Thyroid gland (tissue), 4 donors: ENCODE measurements at regions of chr4 and their contacts with region 1.

Region 1: GRCh38 chr4:154618708-154619315 is 6.4 kb upstream of the FGG start:
- DNase-seq: peak; percentile 72 to 73
- H3K4me3 ChIP-seq: no peak overlapping the region
- H3K27ac ChIP-seq: no peak overlapping the region
- H3K4me1 ChIP-seq: no peaks in the 10 kb centered on the region
- H3K27me3 ChIP-seq: no peaks in the 10 kb centered on the region
- CTCF ChIP-seq: peak; percentile 27 to 74 (median 60)
- POLR2A ChIP-seq: no peak

Region 2: GRCh38 chr4:154329268-154329868 is 289.4 kb before region 1 on chr4:
- intact Hi-C with region 1: loop called (anchors 10 kb)
- DNase-seq: peak in 1 of 2 donors; percentile 12
- H3K4me3 ChIP-seq: no peak overlapping the region
- H3K27ac ChIP-seq: no peak overlapping the region
- H3K4me1 ChIP-seq: peaks cover 0 to 6% of the 10 kb centered on the region in 2 donors
- H3K27me3 ChIP-seq: no peaks in the 10 kb centered on the region
- CTCF ChIP-seq: peak in 3 of 6 experiments; percentile 45 to 55 (median 47)
- POLR2A ChIP-seq: no peak

Region 3: GRCh38 chr4:154559494-154560418 is 59.1 kb before region 1 on chr4:
- intact Hi-C with region 1: loop called (anchors 5 kb)
- DNase-seq: no peak
- H3K4me3 ChIP-seq: no peak overlapping the region
- H3K27ac ChIP-seq: no peak overlapping the region
- H3K4me1 ChIP-seq: no peaks in the 10 kb centered on the region
- H3K27me3 ChIP-seq: no peaks in the 10 kb centered on the region
- CTCF ChIP-seq: peak in 4 of 6 experiments; percentile 14 to 45 (median 40)
- POLR2A ChIP-seq: no peak